IMR-90 (cell line): ENCODE measurements at regions of chr12 and their contacts with region 1.

Region 1: GRCh38 chr12:109154451-109155438 is 38.4 kb downstream of the ACACB start:
- DNase-seq: peak; percentile 53
- ATAC-seq: peak; percentile 100
- H3K4me3 ChIP-seq: peak overlapping the region; percentile 58
- H3K27ac ChIP-seq: peak overlapping the region; percentile 5; the same call in 1 of the 2 replicates
- H3K4me1 ChIP-seq: 0 out of 2 replicates have a peak, but pooled peaks cover 2% of the 10 kb centered on the region
- H3K27me3 ChIP-seq: peaks cover 3% of the 10 kb centered on the region
- CTCF ChIP-seq: no peak
- POLR2A ChIP-seq: no peak
- RAD21 ChIP-seq: no peak

Region 2: GRCh38 chr12:108678104-108678730 is 476.5 kb before region 1 on chr12:
- CTCF ChIA-PET with region 1: no interaction called
- POLR2A ChIA-PET with region 1: no interaction called
- dilution Hi-C with region 1: no loop called
- in situ Hi-C with region 1: no loop called
- intact Hi-C with region 1: no loop called
- DNase-seq: no peak
- ATAC-seq: no peak
- H3K4me3 ChIP-seq: no peak overlapping the region
- H3K27ac ChIP-seq: peak overlapping the region; percentile 25; the same call in 1 of the 2 replicates
- H3K4me1 ChIP-seq: peaks cover 4% of the 10 kb centered on the region
- H3K27me3 ChIP-seq: no peaks in the 10 kb centered on the region
- CTCF ChIP-seq: no peak
- POLR2A ChIP-seq: no peak
- RAD21 ChIP-seq: no peak

Region 3: DNA sequence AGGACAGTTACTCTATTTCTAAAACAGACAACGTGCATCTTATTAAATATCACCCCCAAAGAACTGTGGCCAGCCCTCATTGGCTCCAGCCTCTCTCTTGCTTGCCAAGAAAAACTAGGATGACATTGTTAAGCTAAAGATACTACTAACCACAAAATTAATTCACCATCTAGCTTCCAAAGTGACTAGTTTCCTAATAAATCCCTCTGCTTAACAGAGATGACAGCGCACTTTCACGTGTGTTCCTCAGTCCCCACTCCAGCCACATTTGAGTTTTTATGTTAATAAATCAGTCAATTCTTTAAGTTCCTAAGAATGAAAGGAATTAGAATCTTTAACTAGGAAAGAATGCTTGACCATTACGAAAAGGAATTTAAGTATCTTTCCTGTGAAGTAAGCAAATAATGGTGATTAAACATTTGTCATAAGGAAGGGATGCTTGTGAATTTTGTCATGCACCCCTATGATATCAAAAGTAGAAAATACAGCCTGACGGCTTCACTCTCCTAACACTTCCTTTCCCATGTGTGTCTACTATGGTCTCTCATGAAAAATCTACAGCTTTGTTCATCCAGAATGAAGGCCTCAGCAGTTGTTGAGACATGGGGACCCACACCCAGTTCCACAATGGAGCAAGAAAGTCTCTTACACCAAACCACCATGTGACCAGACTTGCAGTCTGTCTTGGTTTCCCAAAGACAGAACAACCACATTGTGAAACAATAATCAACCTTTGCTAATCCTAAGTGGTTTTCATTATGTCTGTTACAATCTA is 431.6 kb before region 1 on chr12:
- CTCF ChIA-PET with region 1: no interaction called
- POLR2A ChIA-PET with region 1: interaction called, 12 read pairs
- dilution Hi-C with region 1: no loop called
- in situ Hi-C with region 1: no loop called
- intact Hi-C with region 1: no loop called
- DNase-seq: peak; percentile 95
- ATAC-seq: peak; percentile 61
- H3K4me3 ChIP-seq: peak overlapping the region; percentile 2; the same call in 1 of the 2 replicates
- H3K27ac ChIP-seq: peak overlapping the region; percentile 98
- H3K4me1 ChIP-seq: peaks cover 36% of the 10 kb centered on the region
- H3K27me3 ChIP-seq: no peaks in the 10 kb centered on the region
- CTCF ChIP-seq: no peak
- POLR2A ChIP-seq: peak; percentile 54; the same call in 1 of the 2 replicates
- RAD21 ChIP-seq: no peak

Region 4: GRCh38 chr12:108768591-108769500 is 385.9 kb before region 1 on chr12:
- CTCF ChIA-PET with region 1: no interaction called
- POLR2A ChIA-PET with region 1: no interaction called
- dilution Hi-C with region 1: no loop called
- in situ Hi-C with region 1: no loop called
- intact Hi-C with region 1: no loop called
- DNase-seq: no peak
- ATAC-seq: peak; percentile 35; the same call in 1 of the 2 replicates
- H3K4me3 ChIP-seq: no peak overlapping the region
- H3K27ac ChIP-seq: no peak overlapping the region
- H3K4me1 ChIP-seq: peaks cover 4% of the 10 kb centered on the region; the same call in 1 of the 2 replicates
- H3K27me3 ChIP-seq: peaks cover 3% of the 10 kb centered on the region; the same call in 1 of the 2 replicates
- CTCF ChIP-seq: no peak
- POLR2A ChIP-seq: no peak
- RAD21 ChIP-seq: no peak

Region 5: DNA sequence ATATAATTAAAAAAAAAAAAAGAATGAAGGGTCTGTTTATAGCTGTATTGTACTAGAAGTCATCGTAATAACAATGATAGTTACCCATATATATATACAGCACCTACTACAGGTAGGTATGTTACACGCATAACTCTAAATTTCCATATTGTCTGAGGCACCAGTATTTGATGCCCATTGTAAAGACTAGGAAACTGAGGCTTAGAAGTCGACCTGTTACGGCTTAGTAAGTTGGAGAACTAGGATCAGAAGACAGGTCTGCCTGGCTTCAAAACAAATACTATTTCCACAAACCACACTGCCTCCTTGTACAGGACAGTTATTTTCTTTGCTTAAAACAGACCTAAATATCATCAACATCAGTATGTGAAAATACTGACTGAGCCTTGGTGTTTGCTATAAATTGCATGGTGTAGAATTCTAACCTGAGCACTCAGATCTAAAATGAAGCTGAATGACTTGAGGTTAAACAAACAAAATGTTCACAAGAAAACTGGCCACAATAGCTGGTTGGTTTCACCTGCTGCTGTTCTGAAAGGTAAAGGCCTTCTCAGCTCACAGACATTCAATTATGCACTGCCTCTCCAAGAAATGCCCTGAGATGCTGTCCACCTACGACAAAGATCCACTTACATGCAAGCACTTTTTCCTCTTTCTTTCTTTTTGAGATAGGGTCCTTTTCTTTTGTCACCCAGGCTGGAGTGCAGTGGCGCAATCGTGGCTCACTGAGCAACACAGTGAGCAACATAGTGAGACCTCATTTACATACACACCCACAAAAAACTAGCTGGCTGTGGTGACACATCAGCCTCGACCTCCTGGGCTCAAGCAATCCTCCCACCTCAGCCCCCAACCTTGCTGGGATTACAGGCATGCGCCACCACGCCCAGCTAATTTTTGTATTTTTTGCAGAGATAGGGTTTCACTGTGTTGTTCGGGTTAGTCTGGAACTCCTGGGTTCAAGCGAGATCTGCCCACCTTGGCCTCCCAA is 333.0 kb before region 1 on chr12:
- CTCF ChIA-PET with region 1: no interaction called
- POLR2A ChIA-PET with region 1: no interaction called
- dilution Hi-C with region 1: no loop called
- in situ Hi-C with region 1: no loop called
- intact Hi-C with region 1: no loop called
- DNase-seq: peak; percentile 69
- ATAC-seq: no peak
- H3K4me3 ChIP-seq: no peak overlapping the region
- H3K27ac ChIP-seq: peak overlapping the region; percentile 51
- H3K4me1 ChIP-seq: peaks cover 26% of the 10 kb centered on the region
- H3K27me3 ChIP-seq: no peaks in the 10 kb centered on the region
- CTCF ChIP-seq: no peak
- POLR2A ChIP-seq: no peak
- RAD21 ChIP-seq: no peak

Region 6: GRCh38 chr12:109065154-109065852 is 89.4 kb before region 1 on chr12:
- CTCF ChIA-PET with region 1: no interaction called
- POLR2A ChIA-PET with region 1: no interaction called
- dilution Hi-C with region 1: no loop called
- in situ Hi-C with region 1: no loop called
- intact Hi-C with region 1: no loop called
- DNase-seq: no peak
- ATAC-seq: no peak
- H3K4me3 ChIP-seq: no peak overlapping the region
- H3K27ac ChIP-seq: no peak overlapping the region
- H3K4me1 ChIP-seq: no peaks in the 10 kb centered on the region
- H3K27me3 ChIP-seq: no peaks in the 10 kb centered on the region
- CTCF ChIP-seq: no peak
- POLR2A ChIP-seq: no peak
- RAD21 ChIP-seq: no peak